Posterior cingulate gyrus (tissue), 11 donors: ENCODE measurements at regions of chrX and their contacts with region 1.

Region 1: DNA sequence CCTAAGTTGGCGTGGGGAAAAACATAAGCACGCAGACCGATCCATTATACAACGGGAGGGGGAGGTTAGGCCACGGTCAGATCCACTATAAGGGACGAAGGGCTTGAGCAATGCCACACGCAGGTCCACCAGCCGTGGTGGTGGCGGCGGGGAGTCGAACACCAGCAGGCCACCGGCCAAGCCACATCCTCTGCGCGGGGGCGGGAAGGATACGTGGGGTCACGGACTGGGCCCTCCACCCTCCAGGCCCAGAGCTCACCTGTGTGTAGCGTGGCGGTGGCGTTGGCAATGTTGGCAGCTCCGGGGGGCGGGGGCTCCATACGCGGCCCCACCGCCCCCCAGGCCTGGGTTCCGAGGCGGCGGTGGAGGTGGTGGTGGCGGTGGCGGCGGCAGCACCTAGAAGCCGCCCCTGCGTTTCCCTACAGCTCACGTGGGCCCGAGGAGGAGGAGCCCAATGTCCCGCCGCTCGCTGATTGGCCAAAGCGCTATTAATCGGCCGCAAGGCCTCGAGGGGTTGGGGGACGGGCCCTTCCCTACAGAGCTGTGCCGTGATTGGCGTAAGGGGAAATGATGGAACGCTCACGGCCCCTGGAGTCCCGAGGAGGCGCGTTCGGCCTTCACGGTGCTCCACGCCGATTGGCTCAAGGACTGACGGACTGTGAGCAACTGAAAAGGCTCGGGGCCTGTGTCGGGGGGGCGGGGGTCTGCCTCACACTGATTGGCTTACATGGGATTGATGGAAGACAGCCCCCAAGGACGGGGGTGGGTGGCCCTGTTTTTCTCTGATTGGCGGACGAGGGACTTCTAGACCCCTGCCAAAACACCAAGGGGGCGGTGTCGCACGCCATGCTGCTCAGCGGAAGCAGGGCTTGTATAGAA is at the start of gene ELK1:
- DNase-seq: peak; percentile 90 to 99 (median 94)

Region 2: DNA sequence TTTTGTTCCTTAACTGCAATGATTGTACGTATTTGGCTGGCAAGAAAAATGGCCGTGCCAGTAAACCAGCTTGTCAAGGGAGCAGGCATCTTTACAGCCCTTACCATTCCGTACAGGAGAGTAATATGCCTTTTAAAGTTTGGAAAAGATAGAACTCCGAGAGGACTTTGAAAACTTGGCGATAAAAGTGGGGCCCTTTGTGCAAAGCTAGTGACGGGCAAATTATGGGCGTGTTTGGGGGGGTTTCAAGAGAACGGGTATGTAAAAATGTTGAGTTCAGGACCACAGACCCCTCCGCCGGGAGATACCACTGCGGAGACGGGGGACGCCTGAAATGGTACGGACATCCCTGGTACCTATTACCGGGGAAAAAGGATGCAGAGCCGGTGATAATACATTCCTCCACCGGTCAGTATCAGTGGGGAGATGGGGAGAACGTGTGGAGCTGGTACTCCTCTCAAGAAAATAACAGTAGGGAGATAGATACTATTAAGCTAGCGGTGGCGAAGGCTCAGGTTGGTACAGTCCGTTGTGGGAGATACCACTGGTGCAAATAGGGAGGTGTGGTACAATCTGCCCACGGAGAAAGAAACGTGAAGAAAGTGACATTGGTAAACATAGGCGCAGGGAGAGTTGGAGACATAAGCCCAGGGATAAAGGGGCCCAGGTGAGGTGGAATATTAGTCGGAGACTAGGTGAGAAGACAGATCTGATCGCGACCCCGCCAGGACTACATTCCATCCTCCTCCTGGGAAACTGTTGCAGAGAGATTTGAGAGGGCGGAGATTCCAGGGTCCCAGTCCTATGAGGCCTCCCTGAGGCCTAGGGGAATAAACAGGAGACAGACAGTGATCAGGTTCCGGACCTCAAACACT is 370.9 kb after region 1 on chrX:
- intact Hi-C with region 1: loop called (anchors 10 kb)
- DNase-seq: peak; percentile 43 to 93 (median 65)